IMR-90 (cell line): ENCODE measurements at regions of chr1 and their contacts with region 1.

Region 1: GRCh38 chr1:113659035-113659434 is 100.3 kb downstream of the PHTF1 start:
- DNase-seq: no peak
- ATAC-seq: no peak
- H3K4me3 ChIP-seq: no peak overlapping the region
- H3K27ac ChIP-seq: no peak overlapping the region
- H3K4me1 ChIP-seq: no peaks in the 10 kb centered on the region
- H3K27me3 ChIP-seq: no peaks in the 10 kb centered on the region
- CTCF ChIP-seq: no peak
- POLR2A ChIP-seq: no peak
- RAD21 ChIP-seq: no peak

Region 2: GRCh38 chr1:113610372-113610771 is 48.7 kb before region 1 on chr1:
- CTCF ChIA-PET with region 1: no interaction called
- POLR2A ChIA-PET with region 1: no interaction called
- dilution Hi-C with region 1: no loop called
- in situ Hi-C with region 1: no loop called
- intact Hi-C with region 1: loop called (anchors 5 kb)
- DNase-seq: no peak
- ATAC-seq: no peak
- H3K4me3 ChIP-seq: no peak overlapping the region
- H3K27ac ChIP-seq: no peak overlapping the region
- H3K4me1 ChIP-seq: no peaks in the 10 kb centered on the region
- H3K27me3 ChIP-seq: no peaks in the 10 kb centered on the region
- CTCF ChIP-seq: no peak
- POLR2A ChIP-seq: no peak
- RAD21 ChIP-seq: no peak